ENCODE measurements at regions of chr15 and their contacts with region 1.

Region 1: DNA sequence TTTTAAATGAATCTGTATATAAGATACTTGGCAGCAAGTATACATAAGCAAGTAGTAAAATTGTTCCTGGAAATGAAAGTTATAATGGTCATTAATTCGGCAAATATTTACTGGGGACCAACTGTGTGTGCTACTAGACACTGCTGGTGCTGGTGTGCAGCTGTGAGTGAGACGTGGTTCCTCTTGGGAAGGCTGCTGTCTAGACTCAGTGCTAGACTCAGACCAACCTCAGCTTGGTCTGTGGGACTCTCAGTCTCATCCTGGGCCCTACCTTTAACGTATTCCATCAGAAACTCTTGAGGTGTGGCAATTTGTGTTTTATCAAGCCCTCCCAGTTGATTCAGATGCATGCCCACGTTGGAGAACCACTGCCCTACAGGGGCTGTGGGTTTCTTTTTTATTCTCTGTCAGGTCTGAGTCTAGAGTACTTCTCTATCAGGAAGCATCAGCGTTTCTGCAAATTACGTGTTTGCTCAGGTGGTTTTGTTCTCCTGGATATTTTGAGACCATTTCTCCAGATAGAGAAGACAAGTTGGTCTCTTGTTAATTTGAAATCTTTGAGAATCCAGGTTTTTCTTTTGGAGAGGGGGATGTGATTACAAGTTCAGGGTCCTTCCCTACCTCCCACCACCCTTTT is 6.8 kb downstream of the TLNRD1 start:
- DNase-seq: no peak
- ATAC-seq: no peak
- H3K4me3 Mint-ChIP-seq: no peak overlapping the region
- H3K27ac Mint-ChIP-seq: no peak overlapping the region
- H3K4me1 Mint-ChIP-seq: peaks cover 61% of the 10 kb centered on the region
- H3K27me3 Mint-ChIP-seq: no peaks in the 10 kb centered on the region
- CTCF ChIP-seq: no peak

Region 2: DNA sequence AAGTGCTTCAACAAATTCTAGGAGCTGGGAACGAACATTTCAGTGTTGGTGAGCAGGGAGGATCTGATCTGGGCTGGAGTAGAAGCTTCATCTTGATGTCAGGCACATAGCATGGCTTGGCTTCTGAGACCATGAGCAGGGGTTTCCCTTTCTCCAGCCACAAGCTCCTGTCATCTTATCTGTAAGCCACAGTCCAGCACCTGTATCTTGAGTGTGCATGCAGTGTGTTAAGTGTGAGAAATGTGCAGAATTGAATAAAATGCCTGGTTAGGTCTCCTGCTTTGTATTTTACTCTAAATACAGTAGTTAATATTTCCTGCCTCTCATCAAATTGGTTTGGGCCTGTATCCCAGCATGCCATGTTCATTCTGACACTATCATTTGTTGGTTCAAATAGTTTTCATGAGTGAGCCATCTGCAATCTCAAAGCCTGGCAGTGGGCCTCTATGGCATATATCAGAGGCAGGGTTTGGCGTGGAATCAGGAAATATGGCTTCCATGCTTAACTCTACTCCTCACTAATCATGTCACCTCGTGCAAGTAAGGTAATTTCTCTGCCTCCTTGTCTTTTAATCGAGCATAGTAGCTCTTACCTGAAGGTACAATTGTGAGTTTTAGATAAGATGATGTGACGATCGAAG is 36.5 kb after region 1 on chr15:
- CTCF ChIA-PET with region 1: no interaction called
- POLR2A ChIA-PET with region 1: interaction called, 10 read pairs
- intact Hi-C with region 1: no loop called
- DNase-seq: no peak
- ATAC-seq: no peak
- H3K4me3 Mint-ChIP-seq: no peak overlapping the region
- H3K27ac Mint-ChIP-seq: no peak overlapping the region
- H3K4me1 Mint-ChIP-seq: peaks cover 3% of the 10 kb centered on the region
- H3K27me3 Mint-ChIP-seq: no peaks in the 10 kb centered on the region
- CTCF ChIP-seq: no peak

Region 3: DNA sequence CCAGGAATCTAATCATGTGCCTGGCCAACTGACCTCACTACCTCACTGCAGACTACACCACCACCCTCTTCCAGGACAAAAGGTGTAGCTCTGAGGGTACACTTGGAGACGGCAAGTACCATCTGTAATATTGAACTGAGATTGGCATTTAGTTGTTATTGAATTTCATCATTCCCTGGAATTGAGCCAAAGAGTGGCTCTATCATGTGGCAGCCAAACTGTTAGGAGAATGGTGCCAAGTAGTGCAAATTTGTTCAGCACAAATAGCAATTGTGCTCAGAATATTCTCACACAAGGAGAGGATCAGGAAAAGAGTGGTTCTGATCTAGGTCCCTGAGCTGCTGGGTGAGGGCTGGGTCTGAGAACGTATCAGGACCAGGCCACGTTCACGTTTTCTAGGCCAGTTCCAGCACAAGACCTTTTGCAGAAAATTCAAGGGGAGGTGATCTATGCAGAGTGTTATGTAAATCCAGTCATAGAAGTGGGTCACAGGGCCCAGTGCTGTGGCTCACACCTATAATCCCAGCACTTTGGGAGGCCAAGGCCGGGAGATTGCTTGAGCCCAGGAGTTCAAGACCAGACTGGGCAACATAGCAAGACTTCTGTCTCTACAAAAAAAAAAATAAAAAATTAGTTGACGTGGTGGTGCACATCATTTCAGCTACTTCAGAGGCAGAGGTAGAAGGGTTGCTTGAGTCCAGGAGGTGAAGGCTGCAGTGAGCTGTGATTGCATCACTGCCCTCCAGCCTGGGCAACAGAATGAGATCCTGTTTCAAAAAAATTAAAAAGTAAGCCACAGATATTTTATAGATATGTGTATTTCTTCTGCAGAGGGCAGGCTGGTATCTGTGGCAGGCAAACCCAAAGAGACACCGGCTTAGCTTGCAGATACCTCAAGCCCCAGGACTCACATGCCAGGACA is 94.6 kb after region 1 on chr15:
- CTCF ChIA-PET with region 1: no interaction called
- POLR2A ChIA-PET with region 1: no interaction called
- intact Hi-C with region 1: no loop called
- DNase-seq: no peak
- ATAC-seq: no peak
- H3K4me3 Mint-ChIP-seq: no peak overlapping the region
- H3K27ac Mint-ChIP-seq: no peak overlapping the region
- H3K4me1 Mint-ChIP-seq: no peaks in the 10 kb centered on the region
- H3K27me3 Mint-ChIP-seq: peaks cover 48% of the 10 kb centered on the region
- CTCF ChIP-seq: no peak

Measured in activated B cell treated with CpG ODN at 0.5 μM for 24 hours (primary cell).